B cell (primary cell): ENCODE measurements at regions of chr11 and their contacts with region 1.

Region 1: GRCh38 chr11:10307442-10308207 is 2.8 kb downstream of the ADM start:
- DNase-seq: peak; percentile 91
- ATAC-seq: peak; percentile 72
- H3K4me3 ChIP-seq: peak overlapping the region; percentile 26 to 92 (median 55)
- H3K4me3 Mint-ChIP-seq: peak overlapping the region; percentile 98
- H3K27ac ChIP-seq: no peak overlapping the region
- H3K27ac Mint-ChIP-seq: peak overlapping the region; percentile 85
- H3K4me1 ChIP-seq: peaks cover 42 to 55% of the 10 kb centered on the region in 2 donors
- H3K4me1 Mint-ChIP-seq: peaks cover 50% of the 10 kb centered on the region
- H3K27me3 ChIP-seq: peaks cover 0 to 34% (median 12%) of the 10 kb centered on the region in 4 experiments
- H3K27me3 Mint-ChIP-seq: peaks cover 20% of the 10 kb centered on the region
- CTCF ChIP-seq: peak; percentile 98

Region 2: DNA sequence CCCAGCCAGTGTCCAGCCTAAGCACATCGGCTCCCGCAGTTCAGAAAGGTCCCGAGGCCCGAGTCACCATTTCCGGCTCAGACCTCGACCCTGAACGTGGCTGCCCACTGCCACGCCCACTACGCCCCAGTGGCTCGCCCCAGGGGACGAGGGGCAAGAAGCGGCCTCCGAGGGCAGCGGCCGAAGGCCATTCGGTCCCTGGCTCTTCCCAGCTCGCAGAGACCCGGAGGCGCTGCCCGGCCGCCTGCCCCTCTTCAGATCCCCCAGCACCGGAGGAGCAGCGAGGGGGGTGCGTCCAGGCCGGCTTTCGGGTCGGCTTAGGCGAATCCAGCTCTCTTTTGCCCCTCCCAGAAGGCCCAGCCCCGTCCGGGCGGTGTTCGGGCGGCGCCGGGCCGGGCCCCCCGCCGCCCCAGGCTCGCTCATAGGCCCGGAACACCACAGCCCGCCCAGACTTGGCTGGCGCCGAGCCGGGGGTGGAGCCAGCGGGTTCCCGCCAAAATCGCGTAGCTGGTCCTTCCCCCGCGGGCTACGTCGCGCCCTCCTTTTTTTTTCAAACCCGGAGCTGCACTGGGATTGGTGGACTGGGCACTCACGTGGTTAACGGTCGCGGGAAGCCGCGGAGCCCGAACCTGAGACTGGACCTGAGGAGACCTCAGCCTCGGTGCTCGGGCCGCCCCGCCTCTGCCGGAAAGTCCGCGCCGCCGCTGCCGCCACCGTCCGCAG is 734.4 kb before region 1 on chr11 and contains the start of gene WEE1:
- CTCF ChIA-PET with region 1: interaction called, 4 read pairs
- POLR2A ChIA-PET with region 1: no interaction called
- intact Hi-C with region 1: loop called (anchors 10 kb)
- DNase-seq: peak; percentile 97
- ATAC-seq: peak; percentile 87
- H3K4me3 ChIP-seq: peak within 1 kb of the TSS; percentile 52 to 96 (median 90)
- H3K4me3 Mint-ChIP-seq: peak within 1 kb of the TSS; percentile 97
- H3K27ac ChIP-seq: peak within 1 kb of the TSS; percentile 83 to 89
- H3K27ac Mint-ChIP-seq: peak within 1 kb of the TSS; percentile 94
- H3K4me1 ChIP-seq: peaks cover 51 to 55% of the 10 kb centered on the region in 2 donors
- H3K4me1 Mint-ChIP-seq: peaks cover 64% of the 10 kb centered on the region
- H3K27me3 ChIP-seq: no peaks in the 10 kb centered on the region
- H3K27me3 Mint-ChIP-seq: no peaks in the 10 kb centered on the region
- CTCF ChIP-seq: no peak
- total RNA-seq, gene WEE1: 31.2 and 31.3 TPM in 2 replicates

Region 3: GRCh38 chr11:9972989-9973388 is 334.6 kb before region 1 on chr11:
- CTCF ChIA-PET with region 1: interaction called, 13 read pairs
- POLR2A ChIA-PET with region 1: no interaction called
- intact Hi-C with region 1: loop called (anchors 1 kb)
- DNase-seq: peak; percentile 70
- ATAC-seq: peak; percentile 76
- H3K4me3 ChIP-seq: no peak overlapping the region
- H3K4me3 Mint-ChIP-seq: no peak overlapping the region
- H3K27ac ChIP-seq: no peak overlapping the region
- H3K27ac Mint-ChIP-seq: no peak overlapping the region
- H3K4me1 ChIP-seq: peaks cover 0 to 3% of the 10 kb centered on the region in 2 donors
- H3K4me1 Mint-ChIP-seq: peaks cover 4% of the 10 kb centered on the region
- H3K27me3 ChIP-seq: no peaks in the 10 kb centered on the region
- H3K27me3 Mint-ChIP-seq: no peaks in the 10 kb centered on the region
- CTCF ChIP-seq: peak; percentile 88

Region 4: GRCh38 chr11:10208131-10208575 is 99.5 kb before region 1 on chr11:
- CTCF ChIA-PET with region 1: interaction called, 187 read pairs
- POLR2A ChIA-PET with region 1: no interaction called
- intact Hi-C with region 1: loop called (anchors 1 kb)
- DNase-seq: peak; percentile 71
- ATAC-seq: peak; percentile 62
- H3K4me3 ChIP-seq: no peak overlapping the region
- H3K4me3 Mint-ChIP-seq: no peak overlapping the region
- H3K27ac ChIP-seq: no peak overlapping the region
- H3K27ac Mint-ChIP-seq: no peak overlapping the region
- H3K4me1 ChIP-seq: no peaks in the 10 kb centered on the region
- H3K4me1 Mint-ChIP-seq: peaks cover 5% of the 10 kb centered on the region
- H3K27me3 ChIP-seq: no peaks in the 10 kb centered on the region
- H3K27me3 Mint-ChIP-seq: no peaks in the 10 kb centered on the region
- CTCF ChIP-seq: peak; percentile 87

Region 5: GRCh38 chr11:10455637-10456487 is 148.2 kb after region 1 on chr11:
- CTCF ChIA-PET with region 1: no interaction called
- POLR2A ChIA-PET with region 1: no interaction called
- intact Hi-C with region 1: loop called (anchors 10 kb)
- DNase-seq: peak; percentile 85
- ATAC-seq: peak; percentile 72
- H3K4me3 ChIP-seq: peak overlapping the region; percentile 52 to 69 (median 66)
- H3K4me3 Mint-ChIP-seq: peak overlapping the region; percentile 96
- H3K27ac ChIP-seq: peak overlapping the region; percentile 75 to 98
- H3K27ac Mint-ChIP-seq: peak overlapping the region; percentile 98
- H3K4me1 ChIP-seq: peaks cover 69 to 83% of the 10 kb centered on the region in 2 donors
- H3K4me1 Mint-ChIP-seq: peaks cover 81% of the 10 kb centered on the region
- H3K27me3 ChIP-seq: no peaks in the 10 kb centered on the region
- H3K27me3 Mint-ChIP-seq: no peaks in the 10 kb centered on the region
- CTCF ChIP-seq: no peak